MCF 10A (cell line): ENCODE measurements at regions of chr1 and their contacts with region 1.

Region 1: DNA sequence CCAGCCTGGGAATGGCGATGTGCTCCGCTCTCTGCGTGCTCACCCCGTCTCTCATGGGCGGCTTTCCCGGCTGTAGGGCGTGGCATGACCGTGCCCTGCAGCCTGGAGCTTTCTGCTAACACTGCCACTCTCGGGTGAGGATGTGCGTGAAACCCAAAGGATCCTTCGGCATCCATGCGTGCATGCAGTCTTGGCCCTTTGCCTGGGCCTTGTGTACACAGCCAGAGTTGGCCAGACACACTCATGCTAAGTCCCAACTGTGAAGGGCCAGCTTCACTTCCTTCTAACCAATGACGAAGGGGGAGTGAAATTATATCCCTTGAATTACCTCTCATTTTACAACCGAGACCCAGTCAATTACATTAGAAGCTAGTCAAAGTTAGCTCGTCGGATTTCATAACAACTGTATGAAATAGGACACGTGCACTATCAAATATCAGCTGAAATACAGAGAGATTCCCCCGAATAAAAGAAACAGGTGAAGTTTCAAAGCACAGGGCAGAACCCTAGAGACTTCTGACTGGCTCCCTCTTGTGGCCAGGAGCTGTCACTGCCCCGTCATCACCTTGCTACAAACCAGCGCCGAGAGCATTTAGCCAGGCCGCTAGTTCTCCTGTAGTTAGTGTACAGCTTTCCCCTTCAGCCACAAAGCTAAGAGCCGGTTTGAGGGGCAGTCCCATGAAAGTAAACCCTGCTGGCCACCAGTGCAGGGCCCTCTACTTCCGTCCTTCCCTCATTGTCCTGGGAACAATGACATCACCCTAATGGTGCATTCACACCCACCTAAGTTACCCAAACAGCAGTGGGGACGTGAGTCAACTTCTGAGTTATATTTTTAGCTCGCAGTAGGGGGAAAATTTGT is 63.4 kb upstream of the COA6 start:
- DNase-seq: peak; percentile 89
- H3K4me3 Mint-ChIP-seq: no peak overlapping the region
- H3K27ac Mint-ChIP-seq: no peak overlapping the region
- H3K4me1 Mint-ChIP-seq: peaks cover 2% of the 10 kb centered on the region
- H3K27me3 Mint-ChIP-seq: no peaks in the 10 kb centered on the region
- CTCF ChIP-seq: peak; percentile 99

Region 2: DNA sequence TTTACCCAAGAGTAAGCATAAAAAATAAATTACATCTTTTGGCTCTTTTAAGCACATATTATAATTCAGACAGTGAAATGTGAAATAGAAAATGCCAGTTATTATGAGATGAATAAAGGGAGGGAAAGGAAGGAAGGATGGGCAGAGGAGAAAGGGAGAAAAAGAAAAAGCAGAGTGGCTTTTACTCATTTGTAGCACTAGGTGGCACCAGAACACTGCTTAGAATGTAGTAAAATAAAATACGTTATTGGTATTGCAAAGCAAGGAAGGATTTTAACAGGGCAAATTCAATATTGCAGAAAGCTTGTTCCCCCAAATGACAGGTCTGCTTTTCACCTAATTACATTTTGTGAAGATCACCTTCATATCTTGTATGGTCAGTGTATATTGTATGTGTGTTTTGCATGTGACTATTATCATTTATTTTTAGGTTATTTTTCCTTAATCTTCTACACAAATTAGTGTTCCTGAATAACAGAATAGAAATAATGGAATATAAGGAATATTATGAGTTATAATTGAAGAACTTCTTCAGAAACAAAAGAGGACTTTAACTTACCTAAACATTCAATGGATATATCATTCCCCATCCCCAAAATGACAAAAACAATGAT is 1005.2 kb before region 1 on chr1:
- CTCF ChIA-PET with region 1: interaction called, 3 read pairs
- POLR2A ChIA-PET with region 1: no interaction called
- intact Hi-C with region 1: loop called (anchors 5 kb)
- DNase-seq: peak; percentile 63
- H3K4me3 Mint-ChIP-seq: no peak overlapping the region
- H3K27ac Mint-ChIP-seq: no peak overlapping the region
- H3K4me1 Mint-ChIP-seq: no peaks in the 10 kb centered on the region
- H3K27me3 Mint-ChIP-seq: no peaks in the 10 kb centered on the region
- CTCF ChIP-seq: peak; percentile 98

Region 3: DNA sequence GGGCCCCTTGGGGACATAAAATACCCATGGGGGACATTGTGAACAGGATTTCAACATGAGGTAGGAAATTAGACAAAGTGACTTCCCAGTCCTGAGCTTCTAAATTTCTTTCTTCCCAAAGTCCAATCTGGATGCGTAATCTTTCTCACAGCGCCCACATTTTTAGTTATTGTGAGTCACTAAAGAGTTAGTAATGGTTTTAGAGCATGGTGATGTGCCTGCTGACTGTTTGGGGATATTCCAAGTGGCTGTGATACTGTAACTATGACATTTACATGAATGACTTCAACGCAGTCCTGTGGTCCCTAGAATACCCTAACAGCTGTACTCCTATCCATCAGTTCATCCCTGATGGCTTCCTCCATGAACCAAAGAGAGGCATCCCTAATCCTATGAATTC is 160.6 kb before region 1 on chr1:
- CTCF ChIA-PET with region 1: interaction called, 220 read pairs
- POLR2A ChIA-PET with region 1: interaction called, 5 read pairs
- intact Hi-C with region 1: loop called (anchors 1 kb)
- DNase-seq: peak; percentile 53
- H3K4me3 Mint-ChIP-seq: no peak overlapping the region
- H3K27ac Mint-ChIP-seq: no peak overlapping the region
- H3K4me1 Mint-ChIP-seq: peaks cover 17% of the 10 kb centered on the region
- H3K27me3 Mint-ChIP-seq: no peaks in the 10 kb centered on the region
- CTCF ChIP-seq: no peak

Region 4: DNA sequence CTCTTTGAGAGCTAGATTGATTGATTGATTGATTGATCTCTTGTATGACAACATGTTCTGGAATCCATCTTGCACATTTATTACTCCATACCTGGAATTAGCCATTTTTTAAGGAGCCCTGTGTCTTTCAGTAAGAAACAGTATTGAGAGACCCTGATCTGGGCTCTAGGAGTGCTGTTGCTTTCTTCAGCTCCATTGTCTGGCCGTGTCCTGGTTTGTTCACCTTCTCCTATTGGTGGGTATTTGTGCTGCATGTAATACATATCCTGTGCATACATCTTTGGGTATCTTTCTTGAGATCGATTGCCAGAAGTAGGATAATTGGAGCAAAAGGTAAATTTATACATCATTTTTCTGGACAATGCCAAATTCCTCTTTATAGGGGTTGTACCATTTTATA is 127.6 kb before region 1 on chr1:
- CTCF ChIA-PET with region 1: interaction called, 18 read pairs
- POLR2A ChIA-PET with region 1: no interaction called
- intact Hi-C with region 1: no loop called
- DNase-seq: no peak
- H3K4me3 Mint-ChIP-seq: no peak overlapping the region
- H3K27ac Mint-ChIP-seq: no peak overlapping the region
- H3K4me1 Mint-ChIP-seq: peaks cover 22% of the 10 kb centered on the region
- H3K27me3 Mint-ChIP-seq: no peaks in the 10 kb centered on the region
- CTCF ChIP-seq: no peak

Region 5: GRCh38 chr1:234226106-234226818 is 83.6 kb before region 1 on chr1:
- CTCF ChIA-PET with region 1: interaction called, 39 read pairs
- POLR2A ChIA-PET with region 1: no interaction called
- intact Hi-C with region 1: no loop called
- DNase-seq: no peak
- H3K4me3 Mint-ChIP-seq: no peak overlapping the region
- H3K27ac Mint-ChIP-seq: no peak overlapping the region
- H3K4me1 Mint-ChIP-seq: peaks cover 4% of the 10 kb centered on the region
- H3K27me3 Mint-ChIP-seq: no peaks in the 10 kb centered on the region
- CTCF ChIP-seq: no peak

Region 6: GRCh38 chr1:234281826-234282489 is 27.9 kb before region 1 on chr1:
- CTCF ChIA-PET with region 1: interaction called, 39 read pairs
- POLR2A ChIA-PET with region 1: no interaction called
- intact Hi-C with region 1: no loop called
- DNase-seq: no peak
- H3K4me3 Mint-ChIP-seq: no peak overlapping the region
- H3K27ac Mint-ChIP-seq: no peak overlapping the region
- H3K4me1 Mint-ChIP-seq: no peaks in the 10 kb centered on the region
- H3K27me3 Mint-ChIP-seq: no peaks in the 10 kb centered on the region
- CTCF ChIP-seq: no peak

Region 7: GRCh38 chr1:234342774-234343173 is 32.9 kb after region 1 on chr1:
- CTCF ChIA-PET with region 1: interaction called, 23 read pairs
- POLR2A ChIA-PET with region 1: no interaction called
- intact Hi-C with region 1: no loop called
- DNase-seq: no peak
- H3K4me3 Mint-ChIP-seq: no peak overlapping the region
- H3K27ac Mint-ChIP-seq: no peak overlapping the region
- H3K4me1 Mint-ChIP-seq: no peaks in the 10 kb centered on the region
- H3K27me3 Mint-ChIP-seq: no peaks in the 10 kb centered on the region
- CTCF ChIP-seq: no peak

Region 8: GRCh38 chr1:235270625-235271024 is 960.8 kb after region 1 on chr1:
- CTCF ChIA-PET with region 1: no interaction called
- POLR2A ChIA-PET with region 1: no interaction called
- intact Hi-C with region 1: no loop called
- DNase-seq: peak; percentile 39
- H3K4me3 Mint-ChIP-seq: no peak overlapping the region
- H3K27ac Mint-ChIP-seq: peak overlapping the region; percentile 2
- H3K4me1 Mint-ChIP-seq: peaks cover 48% of the 10 kb centered on the region
- H3K27me3 Mint-ChIP-seq: no peaks in the 10 kb centered on the region
- CTCF ChIP-seq: no peak